Endothelial cell of umbilical vein (primary cell): ENCODE measurements at regions of chr4 and their contacts with region 1.

Region 1: GRCh38 chr4:77044461-77045150 is 31.2 kb downstream of the CCNI start:
- DNase-seq: peak; percentile 67
- H3K4me3 ChIP-seq: no peak overlapping the region
- H3K27ac ChIP-seq: no peak overlapping the region
- H3K4me1 ChIP-seq: peaks cover 7% of the 10 kb centered on the region
- H3K27me3 ChIP-seq: no peaks in the 10 kb centered on the region
- CTCF ChIP-seq: peak; percentile 37 to 46
- POLR2A ChIP-seq: no peak

Region 2: DNA sequence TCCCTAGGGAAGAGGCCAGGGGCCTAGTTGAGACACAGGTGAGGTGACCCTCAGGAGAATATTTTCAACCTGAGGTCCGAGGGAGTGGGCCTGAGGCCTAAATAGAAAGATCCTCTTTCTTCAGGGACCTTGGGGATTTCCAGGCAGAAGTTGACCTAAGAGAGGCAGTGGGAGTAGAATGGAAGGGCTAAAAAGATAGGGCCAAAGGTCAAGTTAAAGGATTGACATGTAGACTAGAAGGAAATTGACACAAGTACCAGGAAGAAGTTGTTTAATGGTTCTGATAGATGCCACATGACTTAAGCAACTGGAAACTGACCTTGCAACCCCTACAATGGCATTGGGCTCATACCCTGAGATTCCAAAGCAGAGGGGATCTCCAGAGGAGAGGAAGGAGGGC is 532.7 kb before region 1 on chr4:
- CTCF ChIA-PET with region 1: interaction called, 3 read pairs
- POLR2A ChIA-PET with region 1: no interaction called
- dilution Hi-C with region 1: no loop called
- intact Hi-C with region 1: loop called (anchors 1 kb)
- DNase-seq: no peak
- H3K4me3 ChIP-seq: no peak overlapping the region
- H3K27ac ChIP-seq: no peak overlapping the region
- H3K4me1 ChIP-seq: no peaks in the 10 kb centered on the region
- H3K27me3 ChIP-seq: no peaks in the 10 kb centered on the region
- CTCF ChIP-seq: no peak
- POLR2A ChIP-seq: no peak

Region 3: DNA sequence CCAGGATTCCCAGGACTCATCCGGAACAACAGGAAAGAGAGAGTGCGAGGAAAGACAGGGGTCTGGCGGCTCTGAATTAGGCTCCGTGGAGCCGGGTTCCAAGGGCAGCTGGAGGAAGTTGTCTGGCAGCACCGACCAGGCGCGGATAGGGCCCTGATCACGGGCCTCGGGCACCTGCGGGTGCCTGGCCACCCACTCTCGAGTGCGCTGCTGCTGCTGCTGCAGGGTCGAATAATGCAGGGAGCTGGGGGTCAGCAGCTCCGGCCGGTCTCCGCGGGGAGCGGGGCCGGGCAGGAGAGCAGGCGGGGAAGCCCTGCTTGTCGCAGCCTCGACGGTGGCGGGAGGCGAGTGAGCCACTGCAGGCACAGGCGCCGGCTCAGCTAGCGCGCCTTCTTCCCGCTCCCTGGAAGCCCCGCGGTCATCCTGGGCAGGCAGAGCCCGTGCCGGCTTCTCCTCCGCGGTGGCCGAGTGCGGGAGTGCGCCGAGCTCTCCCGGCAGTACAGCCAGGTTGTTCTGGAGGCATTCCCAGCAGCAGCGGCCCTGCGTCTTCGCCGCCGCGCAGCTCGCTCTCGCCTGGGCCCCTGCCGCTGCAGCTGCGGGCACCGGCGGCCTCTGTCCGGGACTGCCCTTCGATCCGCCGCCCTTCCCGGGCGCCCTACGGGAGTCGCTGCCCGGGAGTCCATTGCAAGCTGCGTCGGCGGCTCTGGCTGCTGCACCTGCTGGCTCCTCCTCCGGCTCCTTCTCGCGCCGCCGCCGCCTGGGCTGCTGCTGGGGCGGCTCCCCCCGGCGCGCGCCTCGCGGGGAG is 147.7 kb before region 1 on chr4:
- CTCF ChIA-PET with region 1: interaction called, 9 read pairs
- POLR2A ChIA-PET with region 1: no interaction called
- dilution Hi-C with region 1: no loop called
- intact Hi-C with region 1: loop called (anchors 5 kb)
- DNase-seq: peak; percentile 35
- H3K4me3 ChIP-seq: peak overlapping the region in 2 of 3 experiments; percentile 2 to 35
- H3K27ac ChIP-seq: no peak overlapping the region
- H3K4me1 ChIP-seq: peaks cover 4% of the 10 kb centered on the region
- H3K27me3 ChIP-seq: peaks cover 42 to 75% of the 10 kb centered on the region in 2 experiments
- CTCF ChIP-seq: no peak
- POLR2A ChIP-seq: no peak

Region 4: DNA sequence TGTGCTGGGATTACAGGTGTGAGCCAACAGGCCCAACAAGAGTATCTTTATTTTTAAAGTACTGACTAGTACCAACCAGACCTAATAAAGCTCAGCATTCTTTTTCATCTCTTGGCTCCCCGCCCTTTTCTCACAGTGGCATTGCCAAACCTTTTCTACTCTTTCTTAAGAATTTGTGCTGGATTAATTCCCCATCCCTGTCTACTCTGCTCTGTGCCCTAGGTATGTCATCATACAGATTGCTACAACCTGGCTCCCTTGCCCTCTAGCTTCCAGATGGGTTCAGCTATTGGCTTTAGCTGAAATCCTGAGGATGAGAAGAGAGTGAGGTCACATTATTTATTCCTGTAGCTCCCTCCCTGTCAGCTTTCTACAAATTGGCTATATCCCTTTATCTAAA is 66.1 kb after region 1 on chr4:
- CTCF ChIA-PET with region 1: no interaction called
- POLR2A ChIA-PET with region 1: no interaction called
- dilution Hi-C with region 1: no loop called
- intact Hi-C with region 1: no loop called
- DNase-seq: no peak
- H3K4me3 ChIP-seq: no peak overlapping the region
- H3K27ac ChIP-seq: no peak overlapping the region
- H3K4me1 ChIP-seq: no peaks in the 10 kb centered on the region
- H3K27me3 ChIP-seq: peaks cover 23 to 30% of the 10 kb centered on the region in 2 experiments
- CTCF ChIP-seq: no peak
- POLR2A ChIP-seq: no peak

Region 5: DNA sequence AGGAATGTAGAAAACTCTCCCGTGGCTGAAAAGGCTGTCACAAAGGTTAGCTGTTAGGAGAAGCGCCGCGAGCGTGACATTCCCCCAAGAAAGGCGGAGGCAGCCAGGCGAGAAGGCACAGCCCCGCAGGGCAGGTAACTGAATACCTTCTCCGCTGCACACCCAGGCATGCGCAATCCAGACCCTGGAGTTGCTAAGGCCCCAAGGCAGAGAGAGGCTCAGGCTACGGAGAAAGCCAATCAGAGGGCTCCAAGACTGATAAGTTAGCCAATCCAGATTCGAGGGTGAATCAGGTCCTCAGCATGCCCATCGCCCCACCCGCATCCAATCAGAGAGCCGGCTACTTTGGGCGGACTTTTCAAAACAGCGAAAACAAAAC is 111.9 kb after region 1 on chr4:
- CTCF ChIA-PET with region 1: interaction called, 11 read pairs
- POLR2A ChIA-PET with region 1: no interaction called
- dilution Hi-C with region 1: no loop called
- intact Hi-C with region 1: no loop called
- DNase-seq: peak; percentile 99
- H3K4me3 ChIP-seq: peak overlapping the region; percentile 75 to 98 (median 80)
- H3K27ac ChIP-seq: peak overlapping the region; percentile 86
- H3K4me1 ChIP-seq: peaks cover 15% of the 10 kb centered on the region
- H3K27me3 ChIP-seq: peaks cover 19 to 22% of the 10 kb centered on the region in 2 experiments
- CTCF ChIP-seq: no peak
- POLR2A ChIP-seq: peak; percentile 57